BJ (cell line): ENCODE measurements at regions of chr1 and their contacts with region 1.

Region 1: DNA sequence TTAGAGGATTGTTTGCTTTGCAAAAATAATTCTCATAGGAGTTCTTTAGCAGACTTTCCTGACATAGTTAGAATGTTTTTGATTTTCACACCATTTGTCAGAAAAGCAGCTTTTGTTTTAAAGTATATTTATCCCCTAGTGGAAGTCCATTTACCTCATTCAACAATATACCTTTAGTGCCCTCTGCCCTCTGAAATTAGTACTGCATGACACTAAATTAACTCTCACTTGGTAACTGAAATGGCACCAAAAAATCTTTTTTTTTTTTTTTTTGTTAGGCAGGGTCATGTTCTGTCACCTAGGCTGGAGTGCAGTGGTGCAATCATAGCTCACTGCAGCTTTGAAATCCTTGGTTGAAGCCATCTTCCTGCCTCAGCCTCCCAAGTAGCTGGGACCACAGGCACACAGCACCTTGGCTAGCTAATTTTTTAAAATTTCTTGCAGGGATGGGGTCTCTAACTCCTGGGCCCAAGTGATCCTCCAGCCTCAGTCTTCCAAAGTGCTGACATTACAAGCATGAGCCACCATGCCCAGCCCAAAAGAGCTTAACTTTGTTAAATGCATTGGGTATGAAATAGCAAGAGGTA is 13.6 kb downstream of the LRRC42 start:
- DNase-seq: no peak
- H3K4me3 ChIP-seq: no peak overlapping the region
- H3K27me3 ChIP-seq: no peaks in the 10 kb centered on the region
- CTCF ChIP-seq: peak; percentile 43

Region 2: DNA sequence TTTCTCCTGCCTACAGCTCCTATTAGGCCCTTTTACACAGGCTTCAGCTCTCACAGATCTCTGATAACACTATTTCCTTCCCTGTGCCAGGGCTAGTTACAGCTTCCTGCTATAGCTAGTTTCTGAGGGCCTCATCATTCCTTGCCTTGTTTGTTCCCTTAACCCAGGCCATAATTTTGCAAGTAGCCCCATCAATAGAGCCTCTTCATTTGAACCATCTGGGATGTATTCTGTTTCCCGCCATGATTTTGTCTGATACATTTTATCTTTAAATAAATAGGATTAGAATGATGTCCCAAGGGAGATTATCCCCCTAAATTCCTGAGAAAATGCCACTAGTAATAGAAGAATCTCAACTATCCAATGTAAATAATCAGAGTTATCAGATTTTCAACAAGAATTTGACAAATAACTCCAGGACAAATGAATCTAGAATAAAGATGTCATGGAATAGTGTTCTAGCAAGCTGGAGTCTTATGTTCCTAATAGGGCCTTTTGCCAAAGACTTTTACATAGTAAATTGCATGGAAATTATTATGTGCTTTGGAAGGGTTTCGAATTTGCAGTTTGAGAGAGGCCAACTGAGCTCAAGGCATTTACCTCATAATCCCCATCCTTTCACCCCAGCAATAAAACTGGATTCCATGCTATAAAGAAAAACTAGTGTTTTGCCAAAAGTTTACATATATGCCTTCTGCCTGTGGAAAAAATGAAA is 30.4 kb before region 1 on chr1:
- CTCF ChIA-PET with region 1: no interaction called
- POLR2A ChIA-PET with region 1: no interaction called
- DNase-seq: no peak
- H3K4me3 ChIP-seq: no peak overlapping the region
- H3K27me3 ChIP-seq: no peaks in the 10 kb centered on the region
- CTCF ChIP-seq: no peak

Region 3: GRCh38 chr1:53946252-53947097 is 13.3 kb before region 1 on chr1 and contains the start of gene LRRC42:
- CTCF ChIA-PET with region 1: interaction called, 14 read pairs
- POLR2A ChIA-PET with region 1: no interaction called
- DNase-seq: no peak
- H3K4me3 ChIP-seq: peak within 1 kb of the TSS; percentile 98
- H3K27me3 ChIP-seq: no peaks in the 10 kb centered on the region
- CTCF ChIP-seq: peak; percentile 23; the same call in 1 of the 2 replicates
- polyA plus RNA-seq, gene LRRC42: 52.9 and 54.6 TPM in 2 replicates

Region 4: DNA sequence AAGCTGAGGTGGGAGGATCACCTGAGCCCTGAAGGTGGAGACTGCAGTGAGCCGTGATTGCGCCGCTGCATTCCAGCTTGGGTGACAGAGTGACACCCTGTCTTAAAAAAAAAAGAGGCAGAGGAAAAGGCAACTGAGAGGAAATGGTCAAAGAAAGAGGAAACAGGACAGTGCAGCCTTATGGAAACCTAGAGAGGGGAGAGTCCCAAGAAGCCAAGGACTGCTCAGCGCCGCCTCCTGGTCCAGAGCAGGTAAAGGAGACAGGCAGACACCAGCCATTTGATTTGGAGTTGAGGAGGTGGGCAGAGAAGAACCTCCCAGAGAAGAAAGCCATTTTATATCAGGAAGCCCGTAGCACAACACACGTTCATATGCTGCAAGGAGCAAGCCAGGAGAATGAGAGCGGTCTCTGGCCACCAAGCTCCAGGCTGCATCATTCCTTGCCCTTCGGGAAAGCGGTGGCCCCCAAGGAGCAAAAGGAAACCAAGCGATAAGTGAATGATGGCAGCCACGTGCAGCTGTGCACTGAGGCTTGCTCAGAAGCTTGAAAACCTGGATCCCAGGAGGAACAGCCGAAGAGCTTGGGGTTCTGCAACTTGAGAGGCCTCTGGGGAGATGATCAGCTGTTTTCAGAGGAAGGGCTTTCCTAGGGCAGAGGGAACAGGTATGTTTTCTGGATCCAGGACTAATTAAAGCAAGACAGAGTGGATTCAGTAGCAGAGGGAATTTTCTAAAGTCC is 20.1 kb after region 1 on chr1:
- CTCF ChIA-PET with region 1: no interaction called
- POLR2A ChIA-PET with region 1: no interaction called
- DNase-seq: no peak
- H3K4me3 ChIP-seq: no peak overlapping the region
- H3K27me3 ChIP-seq: no peaks in the 10 kb centered on the region
- CTCF ChIP-seq: no peak